OCI-LY7 (cell line): ENCODE measurements at regions of chr2 and their contacts with region 1.

Region 1: GRCh38 chr2:68751397-68752339 is 17.1 kb downstream of the ARHGAP25 start:
- DNase-seq: peak; percentile 93
- H3K4me3 ChIP-seq: no peak overlapping the region
- H3K27ac ChIP-seq: peak overlapping the region; percentile 3
- H3K4me1 ChIP-seq: peaks cover 43% of the 10 kb centered on the region
- CTCF ChIP-seq: peak; percentile 98

Region 2: GRCh38 chr2:68734688-68735525 is 16.8 kb before region 1 on chr2 and contains the start of gene ARHGAP25:
- CTCF ChIA-PET with region 1: interaction called, 4 read pairs
- POLR2A ChIA-PET with region 1: interaction called, 14 read pairs
- intact Hi-C with region 1: no loop called
- DNase-seq: peak; percentile 85
- H3K4me3 ChIP-seq: peak within 1 kb of the TSS; percentile 73
- H3K27ac ChIP-seq: peak within 1 kb of the TSS; percentile 94
- H3K4me1 ChIP-seq: peaks cover 55% of the 10 kb centered on the region
- CTCF ChIP-seq: no peak
- total RNA-seq, gene ARHGAP25: 18.6 and 22.3 TPM in 2 replicates

Region 3: DNA sequence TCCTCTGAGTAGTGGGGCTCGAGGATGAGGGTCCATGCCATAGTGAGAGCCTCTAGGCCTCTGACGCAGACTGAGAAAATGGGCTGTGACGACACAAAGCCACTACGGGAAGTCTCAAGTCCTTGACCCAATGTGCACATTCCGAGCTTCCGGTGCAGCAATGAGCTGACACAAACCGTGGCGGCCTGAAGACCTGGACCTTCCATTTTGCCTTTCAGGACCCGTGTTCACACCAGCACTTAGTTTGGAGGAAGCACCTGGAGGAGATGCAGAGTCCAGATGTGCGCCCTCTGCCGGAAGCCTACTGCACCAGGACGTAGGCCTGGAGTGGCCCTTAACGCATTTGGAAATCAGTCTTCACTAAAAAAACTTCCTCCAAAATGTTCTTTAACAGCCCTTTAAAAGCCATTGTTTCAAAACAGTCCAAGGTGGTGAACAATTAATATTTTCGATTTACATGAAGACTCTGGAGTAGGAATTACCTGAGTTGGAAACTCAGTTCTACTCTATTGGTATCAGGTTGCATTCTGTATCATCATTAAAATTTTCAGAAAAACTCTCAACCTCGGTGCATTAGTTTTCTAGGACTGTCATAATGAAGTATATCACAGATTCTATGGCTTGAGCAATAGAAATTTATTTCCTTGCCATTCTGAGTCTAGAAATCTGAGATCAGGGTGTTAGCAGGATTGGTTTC is 85.6 kb after region 1 on chr2:
- CTCF ChIA-PET with region 1: interaction called, 5 read pairs
- POLR2A ChIA-PET with region 1: interaction called, 3 read pairs
- intact Hi-C with region 1: loop called (anchors 1 kb)
- DNase-seq: peak; percentile 85
- H3K4me3 ChIP-seq: no peak overlapping the region
- H3K27ac ChIP-seq: no peak overlapping the region
- H3K4me1 ChIP-seq: peaks cover 50% of the 10 kb centered on the region
- CTCF ChIP-seq: peak; percentile 97

Region 4: GRCh38 chr2:68901199-68901960 is 149.7 kb after region 1 on chr2:
- CTCF ChIA-PET with region 1: no interaction called
- POLR2A ChIA-PET with region 1: no interaction called
- intact Hi-C with region 1: loop called (anchors 2 kb)
- DNase-seq: peak; percentile 20
- H3K4me3 ChIP-seq: no peak overlapping the region
- H3K27ac ChIP-seq: no peak overlapping the region
- H3K4me1 ChIP-seq: peaks cover 3% of the 10 kb centered on the region
- CTCF ChIP-seq: peak; percentile 51; the same call in 1 of the 2 replicates

Region 5: GRCh38 chr2:68987021-68987503 is 235.4 kb after region 1 on chr2:
- CTCF ChIA-PET with region 1: no interaction called
- POLR2A ChIA-PET with region 1: no interaction called
- intact Hi-C with region 1: no loop called
- DNase-seq: no peak
- H3K4me3 ChIP-seq: no peak overlapping the region
- H3K27ac ChIP-seq: no peak overlapping the region
- H3K4me1 ChIP-seq: no peaks in the 10 kb centered on the region
- CTCF ChIP-seq: no peak